ENCODE measurements at regions of chr1 and their contacts with region 1.

Region 1: DNA sequence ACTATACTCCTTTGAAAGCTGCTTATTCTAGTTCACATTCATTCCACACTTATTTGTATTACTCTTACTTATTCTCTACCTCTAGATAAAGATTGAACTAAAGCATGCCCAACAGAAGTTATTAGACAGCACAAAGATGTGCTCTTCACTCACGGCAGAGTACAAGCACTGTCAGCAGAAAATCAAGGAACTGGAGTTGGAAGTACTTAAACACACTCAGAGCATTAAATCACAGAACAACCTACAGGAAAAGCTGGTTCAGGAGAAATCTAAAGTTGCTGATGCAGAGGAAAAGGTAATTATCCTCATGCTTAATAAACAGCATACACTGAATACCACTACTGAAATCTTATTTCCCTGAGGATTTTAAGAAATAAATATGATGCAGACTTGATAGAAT is 81.3 kb upstream of the PPIH start:
- DNase-seq: no peak
- H3K4me3 ChIP-seq: no peak overlapping the region
- H3K27ac ChIP-seq: no peak overlapping the region
- H3K4me1 ChIP-seq: no peaks in the 10 kb centered on the region
- CTCF ChIP-seq: no peak

Region 2: GRCh38 chr1:42646056-42646455 is 69.1 kb after region 1 on chr1:
- CTCF ChIA-PET with region 1: no interaction called
- POLR2A ChIA-PET with region 1: no interaction called
- intact Hi-C with region 1: loop called (anchors 5 kb)
- DNase-seq: no peak
- H3K4me3 ChIP-seq: no peak overlapping the region
- H3K27ac ChIP-seq: no peak overlapping the region
- H3K4me1 ChIP-seq: no peaks in the 10 kb centered on the region
- CTCF ChIP-seq: no peak

Region 3: GRCh38 chr1:42747125-42747524 is 170.2 kb after region 1 on chr1:
- CTCF ChIA-PET with region 1: no interaction called
- POLR2A ChIA-PET with region 1: no interaction called
- intact Hi-C with region 1: loop called (anchors 1 kb)
- DNase-seq: peak; percentile 34
- H3K4me3 ChIP-seq: no peak overlapping the region
- H3K27ac ChIP-seq: no peak overlapping the region
- H3K4me1 ChIP-seq: no peaks in the 10 kb centered on the region
- CTCF ChIP-seq: peak; percentile 75